Aorta (tissue), 5 donors: ENCODE measurements at regions of chr19 and their contacts with region 1.

Region 1: GRCh38 chr19:17390665-17391370 is 3.2 kb downstream of the CCDC194 start:
- DNase-seq: peak; percentile 96 to 98
- ATAC-seq: peak; percentile 97
- H3K4me3 ChIP-seq: peak overlapping the region; percentile 27 to 58
- H3K27ac ChIP-seq: no peak overlapping the region
- H3K4me1 ChIP-seq: no peaks in the 10 kb centered on the region
- H3K27me3 ChIP-seq: no peaks in the 10 kb centered on the region

Region 2: GRCh38 chr19:17170538-17171297 is 220.1 kb before region 1 on chr19:
- intact Hi-C with region 1: no loop called
- DNase-seq: no peak
- ATAC-seq: no peak
- H3K4me3 ChIP-seq: no peak overlapping the region
- H3K27ac ChIP-seq: no peak overlapping the region
- H3K4me1 ChIP-seq: no peaks in the 10 kb centered on the region
- H3K27me3 ChIP-seq: no peaks in the 10 kb centered on the region

Region 3: GRCh38 chr19:17346109-17346671 is 44.6 kb before region 1 on chr19:
- intact Hi-C with region 1: loop called (anchors 1 kb)
- DNase-seq: peak; percentile 82 to 95
- ATAC-seq: peak; percentile 89
- H3K4me3 ChIP-seq: no peak overlapping the region
- H3K27ac ChIP-seq: no peak overlapping the region
- H3K4me1 ChIP-seq: peaks cover 3 to 4% of the 10 kb centered on the region in 2 donors
- H3K27me3 ChIP-seq: no peaks in the 10 kb centered on the region

Region 4: DNA sequence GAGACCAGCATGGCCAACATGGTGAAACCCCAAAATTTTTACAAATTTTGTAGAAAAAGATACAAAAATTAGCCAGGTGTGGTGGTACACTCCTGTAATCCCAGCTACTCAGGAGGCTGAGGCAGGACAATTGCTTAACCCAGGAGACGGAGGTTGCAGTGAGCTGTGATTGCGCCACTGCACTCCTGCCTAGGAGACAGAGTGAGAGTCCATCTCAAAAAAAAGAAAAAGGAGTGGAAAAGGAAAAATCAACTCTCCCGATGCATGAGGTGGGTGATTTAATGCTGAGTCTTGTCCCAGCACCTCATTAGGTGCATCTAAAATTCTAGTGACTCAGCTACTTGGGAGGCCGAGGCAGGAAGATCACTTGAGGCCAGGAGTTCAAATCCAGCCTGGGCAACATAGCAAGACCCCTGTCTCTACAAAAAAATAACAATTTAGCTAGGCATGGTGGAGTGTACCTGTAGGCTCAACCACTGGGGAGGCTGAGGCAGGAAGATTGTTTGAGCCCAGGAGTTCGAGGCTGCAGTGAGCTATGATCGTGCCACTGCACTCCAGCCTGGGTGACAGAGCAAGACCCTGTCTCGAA is 33.6 kb before region 1 on chr19:
- intact Hi-C with region 1: no loop called
- DNase-seq: no peak
- ATAC-seq: no peak
- H3K4me3 ChIP-seq: no peak overlapping the region
- H3K27ac ChIP-seq: no peak overlapping the region
- H3K4me1 ChIP-seq: no peaks in the 10 kb centered on the region
- H3K27me3 ChIP-seq: no peaks in the 10 kb centered on the region